H1 (cell line): ENCODE measurements at regions of chr20 and their contacts with region 1.

Region 1: DNA sequence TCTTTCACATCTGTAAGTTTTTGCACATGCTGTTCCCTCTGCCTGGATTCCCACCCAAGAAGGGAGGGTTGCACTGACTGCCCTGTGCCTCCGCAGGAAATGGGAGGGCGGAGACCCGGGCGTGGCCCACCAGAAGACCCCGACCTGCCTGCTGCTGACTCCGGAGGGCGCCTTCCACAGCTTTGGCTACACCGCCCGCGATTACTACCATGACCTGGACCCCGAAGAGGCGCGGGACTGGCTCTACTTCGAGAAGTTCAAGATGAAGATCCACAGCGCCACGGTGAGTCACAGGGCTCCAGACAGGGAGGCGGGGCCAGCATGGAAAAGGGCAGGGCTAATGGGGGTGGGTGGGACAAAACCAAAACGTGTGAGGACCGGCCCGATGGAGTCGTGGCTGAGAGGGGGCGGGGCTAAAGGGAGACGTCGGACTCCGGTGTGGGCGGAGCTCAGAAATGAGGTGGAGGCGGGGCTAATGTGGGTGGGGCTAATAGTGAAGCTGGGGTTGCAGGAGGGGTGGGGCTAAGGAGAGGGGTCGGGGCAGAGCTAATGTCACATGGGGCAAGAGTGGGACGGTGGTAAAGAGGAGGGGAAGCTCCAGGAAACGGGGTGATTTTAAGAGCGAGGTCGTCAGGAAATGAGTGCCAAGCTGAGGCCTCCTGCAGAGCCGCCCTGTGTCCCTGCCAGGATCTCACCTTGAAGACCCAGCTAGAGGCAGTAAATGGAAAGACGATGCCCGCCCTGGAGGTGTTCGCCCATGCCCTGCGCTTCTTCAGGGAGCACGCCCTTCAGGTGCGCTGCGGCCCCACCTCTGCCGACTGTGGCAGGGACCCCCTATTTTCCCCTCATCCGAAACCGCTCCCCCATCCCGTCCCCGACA is 12.6 kb downstream of the HSPA12B start:
- DNase-seq: peak; percentile 95 to 100
- H3K4me3 ChIP-seq: peak overlapping the region; percentile 50 to 74 (median 61)
- H3K27ac ChIP-seq: no peak overlapping the region
- H3K4me1 ChIP-seq: peaks cover 0 to 14% (median 10%) of the 10 kb centered on the region in 4 experiments; a peak in 5 of 7 replicates
- H3K27me3 ChIP-seq: peaks cover 0 to 10% (median 9%) of the 10 kb centered on the region in 4 experiments; a peak in 4 of 7 replicates
- CTCF ChIP-seq: peak in 1 of 3 experiments; percentile 0; a peak in 1 of 4 replicates
- EP300 ChIP-seq: no peak
- POLR2A ChIP-seq: no peak; a peak in 1 of 3 replicates
- RAD21 ChIP-seq: 0 out of 4 replicates have a peak, but pooled peaks of 1 of the 2 experiments have one; percentile 15

Region 2: DNA sequence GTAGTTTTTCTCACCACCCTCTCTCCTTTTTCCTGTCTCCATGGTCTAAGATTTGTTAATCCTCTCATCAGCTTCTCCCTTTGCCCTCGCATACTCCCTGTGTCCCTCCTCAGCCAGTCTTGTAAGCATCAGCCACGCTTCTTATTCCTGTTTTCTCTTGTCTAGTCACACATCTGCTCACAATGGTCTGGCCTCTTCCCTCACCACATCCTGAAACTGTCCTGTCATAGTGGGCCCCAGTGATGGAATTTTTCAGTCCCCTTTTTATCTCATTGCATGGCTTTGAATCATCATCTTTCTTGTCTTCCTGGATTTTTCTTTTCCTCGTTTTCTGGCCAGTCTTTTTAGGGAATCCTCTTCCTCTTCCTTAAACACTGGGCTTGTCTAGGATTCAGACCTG is 139.0 kb before region 1 on chr20:
- CTCF ChIA-PET with region 1: no interaction called
- POLR2A ChIA-PET with region 1: no interaction called
- DNase-seq: no peak
- H3K4me3 ChIP-seq: no peak overlapping the region
- H3K27ac ChIP-seq: no peak overlapping the region
- H3K4me1 ChIP-seq: no peaks in the 10 kb centered on the region
- H3K27me3 ChIP-seq: no peaks in the 10 kb centered on the region
- CTCF ChIP-seq: no peak
- EP300 ChIP-seq: no peak
- POLR2A ChIP-seq: no peak
- RAD21 ChIP-seq: no peak

Region 3: DNA sequence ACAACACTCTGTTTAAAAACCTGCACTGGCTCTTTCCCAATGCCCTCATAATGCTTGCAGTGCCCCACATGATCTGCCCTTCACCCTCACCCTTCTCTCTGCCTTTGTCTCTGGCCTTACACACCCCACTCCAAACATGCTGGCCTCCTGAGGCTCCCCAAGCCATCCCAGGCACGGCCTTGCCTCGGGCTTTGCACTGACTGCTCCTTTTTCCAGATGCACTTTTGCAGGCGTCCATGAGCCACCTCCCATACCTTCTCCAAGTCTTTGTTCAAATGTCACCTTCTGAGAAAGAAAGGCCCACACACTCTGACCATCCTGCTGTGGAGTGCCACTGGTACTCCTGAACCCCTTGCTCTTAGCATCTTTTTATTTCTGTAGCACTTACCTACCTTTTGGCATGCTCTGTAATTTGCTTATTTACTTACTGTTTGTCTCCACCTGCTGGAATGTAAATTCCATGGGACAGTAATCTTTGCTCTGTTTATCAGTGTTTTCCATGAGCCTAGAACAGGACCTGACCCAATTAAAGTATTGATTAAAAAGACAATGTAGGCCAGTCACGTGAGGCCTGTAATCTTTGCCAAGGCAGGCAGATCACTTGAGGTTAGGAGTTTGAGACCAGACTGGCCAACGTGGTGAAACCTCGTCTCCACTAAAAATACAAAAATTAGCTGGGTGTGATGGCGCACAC is 112.6 kb before region 1 on chr20:
- CTCF ChIA-PET with region 1: no interaction called
- POLR2A ChIA-PET with region 1: no interaction called
- DNase-seq: no peak
- H3K4me3 ChIP-seq: no peak overlapping the region
- H3K27ac ChIP-seq: no peak overlapping the region
- H3K4me1 ChIP-seq: peaks cover 0 to 6% (median 0%) of the 10 kb centered on the region in 4 experiments; a peak in 2 of 7 replicates
- H3K27me3 ChIP-seq: no peaks in the 10 kb centered on the region
- CTCF ChIP-seq: peak in 1 of 3 experiments; percentile 18; a peak in 1 of 4 replicates
- EP300 ChIP-seq: no peak
- POLR2A ChIP-seq: no peak
- RAD21 ChIP-seq: peak; percentile 28 to 36

Region 4: DNA sequence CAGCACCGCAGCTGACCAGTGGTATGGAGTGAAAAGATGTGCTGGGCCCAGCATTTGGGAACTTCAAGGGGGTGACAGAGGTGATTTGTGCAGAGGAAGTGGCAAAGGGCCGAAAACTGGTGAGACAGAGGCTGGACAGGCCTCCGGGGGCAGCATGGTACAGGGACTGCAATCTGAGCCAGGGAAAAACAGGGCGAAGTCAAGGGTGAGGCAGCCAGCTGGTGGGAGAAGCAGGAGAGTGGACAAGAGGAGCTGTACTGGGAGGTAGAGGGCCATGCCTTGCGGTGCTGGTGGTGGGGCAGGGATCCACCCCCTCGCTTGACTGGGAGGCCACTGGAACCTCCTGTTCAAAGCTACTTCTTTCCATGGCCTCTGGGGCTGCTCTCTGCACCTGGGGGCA is 74.5 kb before region 1 on chr20:
- CTCF ChIA-PET with region 1: interaction called, 35 read pairs
- POLR2A ChIA-PET with region 1: interaction called, 3 read pairs
- DNase-seq: no peak
- H3K4me3 ChIP-seq: no peak overlapping the region
- H3K27ac ChIP-seq: no peak overlapping the region
- H3K4me1 ChIP-seq: peaks cover 0 to 10% (median 3%) of the 10 kb centered on the region in 4 experiments; a peak in 4 of 7 replicates
- H3K27me3 ChIP-seq: peaks cover 6 to 25% (median 19%) of the 10 kb centered on the region in 4 experiments; a peak in 6 of 7 replicates
- CTCF ChIP-seq: peak; percentile 40 to 58 (median 58); a peak in 3 of 4 replicates
- EP300 ChIP-seq: no peak
- POLR2A ChIP-seq: no peak
- RAD21 ChIP-seq: peak; percentile 25 to 43; a peak in 3 of 4 replicates

Region 5: DNA sequence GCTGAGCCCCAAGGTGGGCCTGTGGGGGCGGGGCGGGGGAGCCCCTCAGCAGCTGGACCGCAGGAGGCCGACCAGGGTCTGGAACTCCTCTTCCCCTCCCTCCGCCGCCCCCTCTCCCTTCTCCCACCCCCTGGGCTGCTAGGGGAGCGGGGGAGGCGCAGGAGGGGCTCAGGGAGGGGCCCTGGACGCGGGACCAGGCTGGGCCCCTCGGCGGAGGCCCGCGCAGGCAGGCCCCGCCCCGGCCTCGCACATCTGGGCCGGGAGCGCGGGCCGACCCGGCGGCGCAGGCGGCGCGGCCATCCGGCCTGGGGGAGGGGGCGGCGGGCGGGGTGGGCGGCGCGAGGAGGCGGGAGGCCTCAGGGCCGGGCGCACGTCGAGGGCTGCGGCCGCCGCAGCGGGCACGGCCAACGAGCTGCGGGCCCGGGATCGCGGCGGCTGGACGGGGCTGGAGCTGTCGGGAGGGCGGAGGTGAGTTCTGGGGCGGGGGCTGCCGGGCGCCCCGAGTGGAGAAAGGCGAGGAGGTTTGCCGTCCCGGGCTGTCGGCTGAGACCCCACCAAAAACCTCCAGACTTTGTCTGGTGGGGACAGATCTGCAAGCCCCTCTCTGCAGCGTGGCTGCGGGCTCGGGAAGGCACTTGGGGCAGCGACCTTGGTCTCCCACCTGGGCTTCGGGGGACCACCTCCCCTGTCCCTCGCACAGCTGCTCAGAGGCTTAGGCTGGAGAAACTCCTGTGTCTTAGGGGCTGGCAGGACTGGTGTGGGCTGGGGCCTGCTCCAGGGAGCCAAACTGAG is 12.5 kb before region 1 on chr20 and contains the start of gene HSPA12B:
- CTCF ChIA-PET with region 1: interaction called, 221 read pairs
- POLR2A ChIA-PET with region 1: interaction called, 13 read pairs
- DNase-seq: peak in 1 of 2 experiments; percentile 72
- H3K4me3 ChIP-seq: peak within 1 kb of the TSS; percentile 33 to 59 (median 41)
- H3K27ac ChIP-seq: no peak within 1 kb of the TSS
- H3K4me1 ChIP-seq: peaks cover 0 to 19% (median 15%) of the 10 kb centered on the region in 4 experiments; a peak in 5 of 7 replicates
- H3K27me3 ChIP-seq: peaks cover 1 to 26% (median 22%) of the 10 kb centered on the region in 4 experiments; a peak in 6 of 7 replicates
- CTCF ChIP-seq: no peak
- EP300 ChIP-seq: no peak
- POLR2A ChIP-seq: no peak
- RAD21 ChIP-seq: no peak
- total RNA-seq, gene HSPA12B: 4.3 and 4.9 TPM in 2 replicates

Region 6: DNA sequence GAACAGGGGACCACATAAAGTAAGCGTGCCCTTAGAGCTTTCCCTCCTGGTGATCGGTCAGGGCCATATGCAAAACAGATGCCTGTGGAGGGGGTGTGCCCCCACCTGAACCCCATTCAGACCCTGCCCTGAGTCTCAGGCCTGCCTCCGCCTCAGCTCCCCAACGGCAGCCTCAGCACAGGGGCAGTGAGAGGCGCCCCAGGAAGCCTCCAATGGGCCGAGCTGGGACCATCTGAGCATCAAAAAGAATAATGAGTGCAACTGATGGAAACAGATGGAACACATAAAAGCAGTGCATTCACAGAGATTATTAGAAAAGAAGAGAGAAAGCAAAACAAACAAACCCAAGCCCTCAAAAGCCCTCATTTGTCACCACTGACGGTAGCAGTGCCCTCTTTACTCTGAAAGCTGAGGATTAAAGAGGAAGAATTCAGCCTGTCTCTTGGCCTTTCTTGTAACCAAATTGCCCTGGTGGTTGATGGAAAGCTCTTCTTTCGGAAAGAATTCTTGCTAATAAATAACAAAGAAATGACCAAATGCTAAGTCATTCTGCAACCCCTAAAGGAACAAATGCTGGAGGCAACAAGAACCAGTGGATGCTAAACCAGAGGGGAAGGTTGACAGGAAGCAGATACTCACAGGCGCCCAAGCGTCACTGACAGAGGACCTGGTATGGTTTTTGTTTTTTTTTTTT is 15.8 kb after region 1 on chr20:
- CTCF ChIA-PET with region 1: interaction called, 277 read pairs
- POLR2A ChIA-PET with region 1: interaction called, 13 read pairs
- DNase-seq: no peak
- H3K4me3 ChIP-seq: no peak overlapping the region
- H3K27ac ChIP-seq: no peak overlapping the region
- H3K4me1 ChIP-seq: no peaks in the 10 kb centered on the region
- H3K27me3 ChIP-seq: no peaks in the 10 kb centered on the region
- CTCF ChIP-seq: no peak
- EP300 ChIP-seq: no peak
- POLR2A ChIP-seq: no peak
- RAD21 ChIP-seq: no peak